Right ventricle myocardium superior (tissue), 1 donor: ENCODE measurements at regions of chr17 and their contacts with region 1.

Region 1: GRCh38 chr17:7136266-7136877 is 21.8 kb upstream of the ASGR2 start:
- DNase-seq: peak; percentile 89
- ATAC-seq: peak; percentile 35

Region 2: DNA sequence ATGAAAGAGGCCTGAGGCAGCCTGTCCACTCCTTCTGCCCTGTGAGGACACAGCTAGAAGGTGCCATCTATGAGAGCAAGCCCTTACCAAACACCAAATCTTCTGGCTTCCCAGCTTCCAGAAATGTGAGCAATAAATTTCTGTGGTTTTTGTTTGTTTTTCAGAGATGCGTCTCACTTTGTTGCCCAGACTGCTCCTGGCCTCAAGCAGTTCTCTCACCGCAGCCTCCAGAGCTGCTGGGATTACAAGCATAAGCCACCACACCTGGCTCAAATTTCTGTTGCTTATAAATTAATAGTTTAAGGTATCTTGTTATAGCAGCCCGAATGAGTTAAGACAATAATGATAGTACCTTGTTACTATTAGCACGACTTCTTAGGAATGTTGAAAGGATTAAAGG is 80.0 kb before region 1 on chr17:
- intact Hi-C with region 1: loop called (anchors 2 kb)
- DNase-seq: no peak
- ATAC-seq: no peak